MCF 10A (cell line): ENCODE measurements at regions of chr2 and their contacts with region 1.

Region 1: GRCh38 chr2:199488772-199489400 is 31.1 kb upstream of the SATB2 start:
- DNase-seq: peak; percentile 77
- H3K4me3 Mint-ChIP-seq: no peak overlapping the region
- H3K27ac Mint-ChIP-seq: no peak overlapping the region
- H3K4me1 Mint-ChIP-seq: no peaks in the 10 kb centered on the region
- H3K27me3 Mint-ChIP-seq: peaks cover 20% of the 10 kb centered on the region
- CTCF ChIP-seq: peak; percentile 72

Region 2: GRCh38 chr2:198309673-198310280 is 1179.1 kb before region 1 on chr2:
- CTCF ChIA-PET with region 1: interaction called, 26 read pairs
- POLR2A ChIA-PET with region 1: interaction called, 4 read pairs
- intact Hi-C with region 1: loop called (anchors 1 kb)
- DNase-seq: peak; percentile 65
- H3K4me3 Mint-ChIP-seq: no peak overlapping the region
- H3K27ac Mint-ChIP-seq: no peak overlapping the region
- H3K4me1 Mint-ChIP-seq: peaks cover 6% of the 10 kb centered on the region
- H3K27me3 Mint-ChIP-seq: peaks cover 60% of the 10 kb centered on the region
- CTCF ChIP-seq: peak; percentile 71

Region 3: DNA sequence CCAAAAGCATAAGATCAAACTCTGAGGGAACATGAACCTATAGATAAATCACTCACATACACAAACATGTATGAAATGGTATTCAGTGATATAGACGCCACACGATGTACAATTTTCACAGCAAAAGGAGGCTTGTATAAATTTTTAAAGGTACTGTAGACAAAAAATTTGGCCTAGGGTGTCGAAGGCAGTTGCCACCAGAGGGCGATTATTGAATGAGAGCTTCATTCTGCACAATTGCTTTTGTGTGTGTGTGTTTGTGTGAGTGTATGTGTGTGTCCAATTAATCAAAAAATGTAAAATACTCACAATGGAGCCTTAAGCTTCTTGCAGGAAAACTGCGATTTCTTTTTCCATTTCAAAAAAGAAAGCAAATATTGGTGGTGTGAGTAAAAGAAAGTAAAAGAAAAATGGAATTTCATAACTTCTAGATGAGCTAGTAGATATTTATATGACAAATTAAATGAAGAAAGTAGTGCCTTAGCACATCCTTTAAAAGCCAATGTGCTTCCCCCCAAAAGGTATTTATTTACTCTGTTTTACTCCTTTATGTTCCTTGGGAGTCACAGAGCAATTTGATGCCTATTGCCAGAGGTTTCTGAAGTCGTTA is 831.3 kb before region 1 on chr2:
- CTCF ChIA-PET with region 1: interaction called, 14 read pairs
- POLR2A ChIA-PET with region 1: no interaction called
- intact Hi-C with region 1: loop called (anchors 1 kb)
- DNase-seq: peak; percentile 38
- H3K4me3 Mint-ChIP-seq: no peak overlapping the region
- H3K27ac Mint-ChIP-seq: no peak overlapping the region
- H3K4me1 Mint-ChIP-seq: no peaks in the 10 kb centered on the region
- H3K27me3 Mint-ChIP-seq: peaks cover 71% of the 10 kb centered on the region
- CTCF ChIP-seq: peak; percentile 49

Region 4: GRCh38 chr2:199019898-199020507 is 468.9 kb before region 1 on chr2:
- CTCF ChIA-PET with region 1: interaction called, 4 read pairs
- POLR2A ChIA-PET with region 1: no interaction called
- intact Hi-C with region 1: loop called (anchors 2 kb)
- DNase-seq: peak; percentile 46
- H3K4me3 Mint-ChIP-seq: no peak overlapping the region
- H3K27ac Mint-ChIP-seq: no peak overlapping the region
- H3K4me1 Mint-ChIP-seq: no peaks in the 10 kb centered on the region
- H3K27me3 Mint-ChIP-seq: peaks cover 24% of the 10 kb centered on the region
- CTCF ChIP-seq: peak; percentile 32

Region 5: GRCh38 chr2:199471443-199472057 is 17.3 kb before region 1 on chr2:
- CTCF ChIA-PET with region 1: interaction called, 20 read pairs
- POLR2A ChIA-PET with region 1: no interaction called
- intact Hi-C with region 1: no loop called
- DNase-seq: peak; percentile 43
- H3K4me3 Mint-ChIP-seq: no peak overlapping the region
- H3K27ac Mint-ChIP-seq: no peak overlapping the region
- H3K4me1 Mint-ChIP-seq: no peaks in the 10 kb centered on the region
- H3K27me3 Mint-ChIP-seq: peaks cover 72% of the 10 kb centered on the region
- CTCF ChIP-seq: peak; percentile 44